ENCODE measurements at regions of chr10 and their contacts with region 1.

Region 1: GRCh38 chr10:125521721-125522680 is 161.0 kb downstream of the TEX36 start:
- DNase-seq: no peak
- ATAC-seq: no peak
- H3K4me3 ChIP-seq: no peak overlapping the region
- H3K27ac ChIP-seq: no peak overlapping the region
- H3K4me1 ChIP-seq: no peaks in the 10 kb centered on the region
- H3K27me3 ChIP-seq: no peaks in the 10 kb centered on the region
- CTCF ChIP-seq: no peak; the same call in 1 of the 2 replicates
- POLR2A ChIP-seq: no peak
- RAD21 ChIP-seq: no peak

Region 2: DNA sequence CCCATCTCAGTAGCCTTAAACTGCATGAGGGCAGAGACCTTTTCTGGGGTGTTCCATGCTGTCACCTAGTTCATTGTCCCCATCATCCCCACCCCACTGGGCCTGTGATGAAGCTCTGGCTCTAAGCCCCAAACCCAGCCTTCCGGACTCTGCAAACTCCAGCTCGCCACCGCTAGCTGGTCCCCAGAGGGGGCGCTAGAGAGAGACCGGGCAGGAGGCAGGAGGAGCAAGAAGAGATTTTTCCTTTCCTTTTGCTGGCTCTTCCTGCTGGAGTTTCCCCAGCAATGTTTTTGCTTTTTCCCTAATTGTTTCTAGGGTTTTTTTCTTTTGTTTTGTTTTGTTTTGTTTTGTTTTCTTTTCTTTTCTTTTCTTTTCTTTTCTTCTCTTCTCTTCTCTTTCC is 73.4 kb before region 1 on chr10:
- CTCF ChIA-PET with region 1: no interaction called
- POLR2A ChIA-PET with region 1: no interaction called
- dilution Hi-C with region 1: no loop called
- in situ Hi-C with region 1: no loop called
- intact Hi-C with region 1: no loop called
- DNase-seq: peak; percentile 4
- ATAC-seq: no peak
- H3K4me3 ChIP-seq: no peak overlapping the region
- H3K27ac ChIP-seq: no peak overlapping the region
- H3K4me1 ChIP-seq: no peaks in the 10 kb centered on the region
- H3K27me3 ChIP-seq: peaks cover 5% of the 10 kb centered on the region
- CTCF ChIP-seq: peak; percentile 31; the same call in 1 of the 2 replicates
- POLR2A ChIP-seq: no peak
- RAD21 ChIP-seq: no peak

Region 3: DNA sequence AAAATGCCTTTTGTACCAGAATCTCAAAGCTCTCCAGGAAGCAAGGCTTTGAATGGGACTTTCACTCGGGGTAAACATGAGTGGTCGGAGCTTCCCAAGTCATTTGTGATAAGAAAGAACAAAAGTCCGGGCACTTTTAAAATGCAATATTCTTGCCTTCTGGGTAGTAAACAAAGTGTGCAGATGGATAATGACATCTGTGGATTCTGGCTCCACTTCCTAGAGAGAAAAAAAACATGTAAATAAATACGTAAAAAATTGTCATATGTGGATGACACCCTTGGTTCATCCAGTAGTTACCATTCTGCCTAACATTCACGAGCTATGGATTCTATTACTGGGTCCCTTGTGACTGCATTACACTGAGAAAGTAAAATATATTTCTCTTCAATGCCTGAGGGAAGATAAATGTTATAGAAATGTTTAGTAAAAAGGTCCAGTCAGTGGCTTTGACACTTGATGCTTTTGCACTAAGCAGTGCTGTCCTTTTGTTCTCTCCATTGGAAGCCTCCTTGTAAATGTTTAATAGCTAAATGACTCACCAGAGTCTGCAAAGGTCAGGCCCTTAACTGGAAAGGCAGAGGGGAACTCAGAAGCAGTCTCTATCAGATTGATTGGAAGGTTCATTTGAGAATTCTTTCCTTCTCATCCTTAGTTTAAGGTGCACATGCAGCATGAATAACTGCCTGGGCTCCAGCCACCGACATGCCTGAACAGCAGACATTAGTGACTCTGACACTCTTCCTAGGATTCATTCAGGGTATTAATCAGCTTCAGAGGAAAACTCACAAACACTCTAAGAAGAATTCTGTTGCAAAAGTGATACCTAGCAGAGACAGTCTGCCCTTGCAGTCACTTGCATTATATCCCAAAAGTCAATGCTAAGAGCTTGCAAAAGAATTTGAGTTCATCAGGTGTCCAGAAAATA is 185.8 kb after region 1 on chr10:
- CTCF ChIA-PET with region 1: no interaction called
- POLR2A ChIA-PET with region 1: no interaction called
- dilution Hi-C with region 1: no loop called
- in situ Hi-C with region 1: no loop called
- intact Hi-C with region 1: loop called (anchors 10 kb)
- DNase-seq: peak; percentile 35
- ATAC-seq: peak; percentile 78
- H3K4me3 ChIP-seq: no peak overlapping the region
- H3K27ac ChIP-seq: no peak overlapping the region
- H3K4me1 ChIP-seq: peaks cover 4% of the 10 kb centered on the region
- H3K27me3 ChIP-seq: peaks cover 2% of the 10 kb centered on the region
- CTCF ChIP-seq: no peak
- POLR2A ChIP-seq: no peak
- RAD21 ChIP-seq: no peak

Region 4: GRCh38 chr10:126302826-126303665 is 781.0 kb after region 1 on chr10:
- CTCF ChIA-PET with region 1: no interaction called
- POLR2A ChIA-PET with region 1: no interaction called
- dilution Hi-C with region 1: no loop called
- in situ Hi-C with region 1: no loop called
- intact Hi-C with region 1: no loop called
- DNase-seq: peak; percentile 4
- ATAC-seq: no peak
- H3K4me3 ChIP-seq: no peak overlapping the region
- H3K27ac ChIP-seq: no peak overlapping the region
- H3K4me1 ChIP-seq: no peaks in the 10 kb centered on the region
- H3K27me3 ChIP-seq: no peaks in the 10 kb centered on the region; the same call in 1 of the 2 replicates
- CTCF ChIP-seq: peak; percentile 30
- POLR2A ChIP-seq: no peak
- RAD21 ChIP-seq: peak; percentile 49

Measured in IMR-90 (cell line).